Mammary epithelial cell (primary cell): ENCODE measurements at regions of chr21 and their contacts with region 1.

Region 1: GRCh38 chr21:36354918-36355680 is 30.1 kb upstream of the CHAF1B start:
- DNase-seq: no peak
- H3K4me3 ChIP-seq: no peak overlapping the region
- H3K27ac ChIP-seq: no peak overlapping the region
- H3K4me1 ChIP-seq: no peaks in the 10 kb centered on the region
- H3K27me3 ChIP-seq: no peaks in the 10 kb centered on the region
- CTCF ChIP-seq: no peak

Region 2: GRCh38 chr21:36193207-36193606 is 161.9 kb before region 1 on chr21:
- CTCF ChIA-PET with region 1: no interaction called
- dilution Hi-C with region 1: loop called (anchors 5 kb)
- in situ Hi-C with region 1: no loop called
- intact Hi-C with region 1: no loop called
- DNase-seq: peak; percentile 67
- H3K4me3 ChIP-seq: no peak overlapping the region
- H3K27ac ChIP-seq: no peak overlapping the region
- H3K4me1 ChIP-seq: peaks cover 10% of the 10 kb centered on the region
- H3K27me3 ChIP-seq: no peaks in the 10 kb centered on the region
- CTCF ChIP-seq: no peak

Region 3: DNA sequence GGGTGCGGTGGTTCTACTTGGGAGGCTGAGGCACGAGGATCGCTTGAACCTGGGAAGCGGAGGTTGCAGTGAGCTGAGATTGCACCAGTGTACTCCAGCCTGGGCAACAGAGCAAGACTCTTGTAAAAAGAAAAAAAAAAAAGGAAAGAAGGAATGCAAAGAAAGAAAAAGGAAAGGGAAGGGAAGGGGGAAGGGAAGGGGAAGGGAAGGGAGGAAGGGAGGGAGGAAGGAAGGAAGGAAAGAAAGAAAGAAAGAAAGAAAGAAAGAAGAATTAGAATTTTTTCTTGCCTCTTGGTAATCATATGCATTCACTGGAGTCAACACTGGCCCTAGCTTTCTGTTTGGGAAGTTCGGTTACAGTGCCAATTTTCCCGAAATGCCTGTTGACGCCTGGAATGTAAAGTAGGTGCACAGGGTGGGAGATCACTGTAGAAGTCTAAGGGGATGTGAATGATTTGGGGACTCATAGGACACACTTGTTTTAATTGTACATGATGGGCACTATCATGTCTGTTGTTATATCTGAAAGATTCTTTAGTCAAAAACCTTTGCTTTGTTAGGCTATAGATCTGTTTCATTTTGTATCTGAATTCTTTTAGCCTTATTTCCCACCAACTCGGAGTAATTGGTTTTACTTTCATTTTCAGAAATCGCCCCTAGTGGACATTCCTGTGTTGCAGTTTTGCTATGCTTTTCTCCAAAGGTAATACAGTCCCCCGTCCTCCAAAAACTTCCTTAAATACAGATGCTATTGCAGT is 94.9 kb before region 1 on chr21:
- CTCF ChIA-PET with region 1: no interaction called
- dilution Hi-C with region 1: no loop called
- in situ Hi-C with region 1: no loop called
- intact Hi-C with region 1: no loop called
- DNase-seq: peak; percentile 51
- H3K4me3 ChIP-seq: peak overlapping the region; percentile 43 to 57 (median 55)
- H3K27ac ChIP-seq: peak overlapping the region; percentile 36
- H3K4me1 ChIP-seq: peaks cover 3% of the 10 kb centered on the region
- H3K27me3 ChIP-seq: no peaks in the 10 kb centered on the region
- CTCF ChIP-seq: peak; percentile 75 to 88